Mammary epithelial cell (primary cell): ENCODE measurements at regions of chr11 and their contacts with region 1.

Region 1: GRCh38 chr11:121829159-121829643 is 286.8 kb downstream of the BLID start:
- DNase-seq: peak; percentile 91
- H3K4me3 ChIP-seq: no peak overlapping the region
- H3K27ac ChIP-seq: peak overlapping the region; percentile 17
- H3K4me1 ChIP-seq: peaks cover 18% of the 10 kb centered on the region
- H3K27me3 ChIP-seq: no peaks in the 10 kb centered on the region
- CTCF ChIP-seq: no peak

Region 2: DNA sequence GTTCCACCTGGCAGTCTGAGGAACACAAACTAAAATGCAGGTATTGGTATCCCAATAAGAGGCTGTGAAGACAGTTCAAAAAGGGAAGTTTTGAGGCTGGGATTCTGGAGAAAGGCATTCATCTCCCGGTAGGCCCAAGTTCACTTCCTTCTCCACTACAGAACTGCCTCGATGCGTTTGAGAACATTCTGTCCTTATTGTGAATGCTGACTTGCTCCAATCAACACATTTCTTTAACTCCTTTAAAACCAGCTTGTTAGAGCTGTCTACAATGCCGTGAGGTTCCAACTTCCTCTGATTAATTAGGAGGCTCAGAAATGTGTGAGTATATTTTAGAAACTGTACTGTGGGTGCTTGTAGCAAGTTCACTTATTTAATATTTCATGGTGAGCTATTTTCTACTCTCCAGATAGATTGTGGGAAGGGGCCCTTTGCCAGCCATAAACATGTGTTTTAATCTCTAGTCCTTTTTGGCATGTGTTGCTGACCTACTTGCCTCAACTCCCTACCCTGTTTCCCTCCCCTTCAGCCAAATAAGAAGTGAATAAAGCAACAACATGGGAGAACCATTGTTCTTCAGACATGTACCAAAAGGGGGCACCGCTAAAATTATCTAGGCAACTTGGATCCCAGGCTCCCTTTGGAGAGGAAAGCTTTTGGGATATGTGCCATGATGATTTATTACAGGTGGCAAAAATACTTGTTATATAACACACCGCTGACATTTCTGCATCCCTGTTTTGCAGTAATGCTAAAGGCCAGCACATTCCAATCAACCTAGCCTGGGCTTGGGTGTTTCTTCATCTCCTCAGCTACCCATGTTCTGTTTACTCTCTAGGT is 41.2 kb after region 1 on chr11:
- CTCF ChIA-PET with region 1: no interaction called
- dilution Hi-C with region 1: no loop called
- in situ Hi-C with region 1: no loop called
- intact Hi-C with region 1: no loop called
- DNase-seq: no peak
- H3K4me3 ChIP-seq: no peak overlapping the region
- H3K27ac ChIP-seq: no peak overlapping the region
- H3K4me1 ChIP-seq: no peaks in the 10 kb centered on the region
- H3K27me3 ChIP-seq: peaks cover 5% of the 10 kb centered on the region
- CTCF ChIP-seq: peak in 1 of 2 donors; percentile 29

Region 3: GRCh38 chr11:122095681-122096262 is 266.6 kb after region 1 on chr11:
- CTCF ChIA-PET with region 1: no interaction called
- dilution Hi-C with region 1: no loop called
- in situ Hi-C with region 1: no loop called
- intact Hi-C with region 1: loop called (anchors 1 kb)
- DNase-seq: peak; percentile 42
- H3K4me3 ChIP-seq: peak overlapping the region; percentile 21 to 83 (median 72)
- H3K27ac ChIP-seq: peak overlapping the region; percentile 88
- H3K4me1 ChIP-seq: peaks cover 21% of the 10 kb centered on the region
- H3K27me3 ChIP-seq: no peaks in the 10 kb centered on the region
- CTCF ChIP-seq: no peak

Region 4: DNA sequence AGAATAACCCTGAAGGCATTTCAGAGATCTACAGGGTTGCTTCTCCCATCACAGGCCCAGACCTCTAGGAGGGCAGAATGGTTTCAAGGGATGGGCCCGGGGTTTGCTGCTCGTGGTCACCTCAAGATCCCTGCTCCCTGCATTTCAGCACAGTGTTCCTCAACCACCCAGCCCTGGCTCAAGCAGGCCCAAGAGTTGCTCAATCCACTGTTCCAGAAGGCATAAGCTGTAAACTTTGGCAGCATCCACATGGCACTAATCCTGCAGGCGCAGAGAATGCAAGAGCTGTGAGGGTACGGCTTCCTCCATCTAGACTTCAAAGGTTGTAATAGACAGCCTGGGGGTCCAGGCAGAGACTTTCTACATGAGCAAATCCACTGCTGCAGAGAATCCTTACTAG is 601.3 kb after region 1 on chr11:
- CTCF ChIA-PET with region 1: no interaction called
- dilution Hi-C with region 1: no loop called
- in situ Hi-C with region 1: no loop called
- intact Hi-C with region 1: no loop called
- DNase-seq: no peak
- H3K4me3 ChIP-seq: no peak overlapping the region
- H3K27ac ChIP-seq: no peak overlapping the region
- H3K4me1 ChIP-seq: no peaks in the 10 kb centered on the region
- H3K27me3 ChIP-seq: peaks cover 6% of the 10 kb centered on the region
- CTCF ChIP-seq: no peak